CD4-positive, alpha-beta memory T cell (primary cell): ENCODE measurements at regions of chr4 and their contacts with region 1.

Region 1: GRCh38 chr4:166165829-166166420 is 292.9 kb downstream of the TLL1 start:
- DNase-seq: peak in 4 of 5 donors; percentile 19 to 43 (median 32)
- H3K4me3 ChIP-seq: no peak overlapping the region
- H3K4me3 Mint-ChIP-seq: no peak overlapping the region
- H3K27ac ChIP-seq: no peak overlapping the region
- H3K27ac Mint-ChIP-seq: no peak overlapping the region
- H3K4me1 ChIP-seq: no peaks in the 10 kb centered on the region
- H3K4me1 Mint-ChIP-seq: peaks cover 0 to 2% (median 1%) of the 10 kb centered on the region in 4 donors
- H3K27me3 ChIP-seq: no peaks in the 10 kb centered on the region
- H3K27me3 Mint-ChIP-seq: no peaks in the 10 kb centered on the region

Region 2: GRCh38 chr4:167622481-167623246 is 1456.7 kb after region 1 on chr4:
- CTCF ChIA-PET with region 1: no interaction called
- POLR2A ChIA-PET with region 1: no interaction called
- intact Hi-C with region 1: loop called (anchors 5 kb)
- DNase-seq: no peak
- H3K4me3 ChIP-seq: no peak overlapping the region
- H3K4me3 Mint-ChIP-seq: no peak overlapping the region
- H3K27ac ChIP-seq: no peak overlapping the region
- H3K27ac Mint-ChIP-seq: no peak overlapping the region
- H3K4me1 ChIP-seq: no peaks in the 10 kb centered on the region
- H3K4me1 Mint-ChIP-seq: no peaks in the 10 kb centered on the region
- H3K27me3 ChIP-seq: no peaks in the 10 kb centered on the region
- H3K27me3 Mint-ChIP-seq: peaks cover 0 to 1% of the 10 kb centered on the region in 2 donors

Region 3: DNA sequence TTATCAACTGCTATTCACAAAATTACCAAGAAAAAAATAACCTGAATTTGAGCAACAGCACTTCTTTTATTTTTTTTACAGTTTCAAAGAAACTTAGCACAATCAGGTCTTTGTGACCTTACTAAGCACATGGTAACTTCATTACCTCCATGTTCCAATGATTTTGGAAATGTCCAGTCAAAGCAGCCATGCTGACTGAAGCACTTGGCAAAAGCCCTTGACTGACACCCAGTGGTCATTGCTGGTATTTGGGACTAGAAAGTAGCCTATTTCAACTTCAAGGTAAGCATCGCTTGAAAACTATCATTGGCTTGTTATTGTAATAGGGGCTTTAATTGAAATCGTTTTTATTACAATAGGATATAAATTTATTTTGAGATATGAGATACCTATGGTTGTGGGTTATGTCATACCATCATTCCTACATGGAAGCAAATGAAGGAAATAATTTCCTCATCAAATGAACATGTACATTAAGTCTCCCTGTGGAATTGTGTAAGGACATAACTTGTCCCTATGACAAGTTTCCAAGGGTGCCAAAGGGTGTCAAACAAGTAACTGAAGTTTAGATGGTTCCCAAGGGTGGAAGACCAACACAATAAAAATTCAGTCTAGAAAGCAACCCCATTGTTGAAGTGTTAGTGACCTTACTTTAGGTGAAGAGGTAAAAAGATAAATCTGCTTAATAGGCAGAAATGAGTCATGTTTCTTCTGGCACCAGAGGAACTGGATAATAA is 1911.2 kb after region 1 on chr4:
- CTCF ChIA-PET with region 1: no interaction called
- POLR2A ChIA-PET with region 1: no interaction called
- intact Hi-C with region 1: loop called (anchors 5 kb)
- DNase-seq: peak in 1 of 5 donors; percentile 5
- H3K4me3 ChIP-seq: no peak overlapping the region
- H3K4me3 Mint-ChIP-seq: no peak overlapping the region
- H3K27ac ChIP-seq: no peak overlapping the region
- H3K27ac Mint-ChIP-seq: no peak overlapping the region
- H3K4me1 ChIP-seq: no peaks in the 10 kb centered on the region
- H3K4me1 Mint-ChIP-seq: no peaks in the 10 kb centered on the region
- H3K27me3 ChIP-seq: no peaks in the 10 kb centered on the region
- H3K27me3 Mint-ChIP-seq: peaks cover 0 to 3% of the 10 kb centered on the region in 2 donors

Region 4: GRCh38 chr4:168153596-168154440 is 1987.9 kb after region 1 on chr4:
- CTCF ChIA-PET with region 1: no interaction called
- POLR2A ChIA-PET with region 1: no interaction called
- intact Hi-C with region 1: loop called (anchors 5 kb)
- DNase-seq: peak; percentile 52 to 73 (median 54)
- H3K4me3 ChIP-seq: no peak overlapping the region
- H3K4me3 Mint-ChIP-seq: peak overlapping the region in 7 of 8 donors; percentile 37 to 73 (median 65)
- H3K27ac ChIP-seq: no peak overlapping the region
- H3K27ac Mint-ChIP-seq: peak overlapping the region in 1 of 7 donors; percentile 18
- H3K4me1 ChIP-seq: peaks cover 7% of the 10 kb centered on the region
- H3K4me1 Mint-ChIP-seq: peaks cover 0 to 5% (median under 1%) of the 10 kb centered on the region in 4 donors
- H3K27me3 ChIP-seq: no peaks in the 10 kb centered on the region
- H3K27me3 Mint-ChIP-seq: peaks cover 1 to 2% of the 10 kb centered on the region in 2 donors